Activated T-helper 2 cell treated with anti-CD3 and anti-CD28 coated beads, Interferon-gamma antibody, Interleukin-2, Interleukin-4, amounts not matched to agents 10 μg/mL and 5 μg/mL and 100 μg/mL, durations not matched to agents 14 hours and 24 hours and 36 hours (primary cell): ENCODE measurements at regions of chr20 and their contacts with region 1.

Region 1: GRCh38 chr20:36728986-36729385 is 16.9 kb downstream of the NDRG3 start:
- DNase-seq: no peak
- H3K4me3 Mint-ChIP-seq: no peak overlapping the region
- H3K27ac Mint-ChIP-seq: no peak overlapping the region
- H3K4me1 Mint-ChIP-seq: peaks cover 16% of the 10 kb centered on the region
- H3K27me3 Mint-ChIP-seq: no peaks in the 10 kb centered on the region

Region 2: DNA sequence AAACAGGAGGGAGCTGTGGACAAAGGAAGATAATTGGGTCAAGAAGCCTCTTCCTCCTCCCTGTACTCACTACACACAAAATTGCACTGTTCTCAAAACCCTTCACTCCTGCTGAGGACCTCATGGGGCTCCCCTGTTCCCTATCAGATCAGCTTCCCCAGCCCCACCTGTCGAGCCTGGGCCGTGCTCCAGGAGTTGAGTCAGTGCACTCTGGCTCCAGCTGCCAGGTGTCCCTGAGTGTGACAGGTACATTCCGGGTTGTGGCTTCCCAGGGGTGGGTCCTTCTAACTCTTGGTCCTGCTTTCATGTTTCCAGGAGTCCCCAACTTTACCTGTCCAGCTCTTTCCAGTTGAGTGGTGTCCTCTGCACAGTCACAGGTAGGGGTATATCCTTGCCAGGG is 115.0 kb before region 1 on chr20:
- intact Hi-C with region 1: loop called (anchors 2 kb)
- DNase-seq: no peak
- H3K4me3 Mint-ChIP-seq: no peak overlapping the region
- H3K27ac Mint-ChIP-seq: no peak overlapping the region
- H3K4me1 Mint-ChIP-seq: peaks cover 3% of the 10 kb centered on the region
- H3K27me3 Mint-ChIP-seq: no peaks in the 10 kb centered on the region

Region 3: DNA sequence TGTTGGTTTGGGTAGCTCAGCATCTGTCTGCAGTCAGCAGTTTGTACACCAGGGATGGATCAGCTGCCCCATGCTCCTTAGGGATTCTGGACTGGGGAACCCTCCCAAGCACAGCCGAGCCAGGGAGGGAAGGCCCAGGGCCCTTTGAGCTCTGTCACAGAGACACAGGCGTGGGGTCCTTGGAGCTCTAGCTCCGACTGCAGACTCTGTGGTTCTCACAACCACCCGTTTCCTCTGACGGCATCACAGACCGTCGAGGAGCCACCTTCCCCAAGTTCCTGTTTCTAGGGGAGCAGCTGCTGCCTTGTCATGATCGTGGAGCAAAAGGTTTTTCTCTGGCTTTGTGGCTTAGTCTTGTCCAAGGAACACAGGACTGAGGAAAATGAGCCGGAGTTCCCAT is 83.0 kb before region 1 on chr20 and contains the start of gene SLA2:
- intact Hi-C with region 1: loop called (anchors 2 kb)
- DNase-seq: peak; percentile 60
- H3K4me3 Mint-ChIP-seq: peak within 1 kb of the TSS; percentile 96
- H3K27ac Mint-ChIP-seq: peak within 1 kb of the TSS; percentile 99
- H3K4me1 Mint-ChIP-seq: peaks cover 50% of the 10 kb centered on the region
- H3K27me3 Mint-ChIP-seq: no peaks in the 10 kb centered on the region
- total RNA-seq, gene SLA2: 54.9 and 56.5 TPM in 2 replicates